ENCODE measurements at regions of chr16 and their contacts with region 1.

Region 1: GRCh38 chr16:106623-107324 is 28.7 kb downstream of the MPG start:
- DNase-seq: peak in 8 of 9 experiments; percentile 31 to 82 (median 60)
- ATAC-seq: peak; percentile 80
- H3K4me3 ChIP-seq: no peak overlapping the region
- H3K4me3 Mint-ChIP-seq: no peak overlapping the region
- H3K27ac ChIP-seq: no peak overlapping the region
- H3K27ac Mint-ChIP-seq: no peak overlapping the region
- H3K4me1 ChIP-seq: no peaks in the 10 kb centered on the region
- H3K4me1 Mint-ChIP-seq: peaks cover 3% of the 10 kb centered on the region
- H3K27me3 ChIP-seq: no peaks in the 10 kb centered on the region
- H3K27me3 Mint-ChIP-seq: no peaks in the 10 kb centered on the region
- CTCF ChIP-seq: peak; percentile 72

Region 2: DNA sequence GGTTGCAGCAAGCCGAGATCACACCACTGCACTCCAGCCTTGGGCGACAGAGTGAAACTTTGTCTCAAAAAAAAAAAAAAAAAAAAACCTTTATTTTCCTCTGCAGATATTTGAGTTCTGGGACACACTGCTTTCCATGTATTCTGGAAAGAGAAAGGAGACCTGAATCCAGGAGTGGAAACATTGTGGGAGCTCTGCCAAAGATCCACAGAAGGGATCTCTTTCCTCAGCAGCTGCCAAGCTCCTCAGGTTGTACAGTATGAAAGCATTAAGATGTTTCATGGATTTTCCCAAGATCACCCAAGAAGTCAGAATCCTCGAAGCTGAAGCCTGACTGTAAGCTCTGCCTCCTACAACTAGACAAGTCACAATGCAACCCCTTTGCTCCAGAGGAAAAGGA is 18.2 kb after region 1 on chr16:
- CTCF ChIA-PET with region 1: interaction called, 14 read pairs
- POLR2A ChIA-PET with region 1: no interaction called
- intact Hi-C with region 1: no loop called
- DNase-seq: no peak
- ATAC-seq: no peak
- H3K4me3 ChIP-seq: no peak overlapping the region
- H3K4me3 Mint-ChIP-seq: no peak overlapping the region
- H3K27ac ChIP-seq: peak overlapping the region in 1 of 2 experiments; percentile 83
- H3K27ac Mint-ChIP-seq: no peak overlapping the region
- H3K4me1 ChIP-seq: peaks cover 10% of the 10 kb centered on the region
- H3K4me1 Mint-ChIP-seq: peaks cover 21% of the 10 kb centered on the region
- H3K27me3 ChIP-seq: no peaks in the 10 kb centered on the region
- H3K27me3 Mint-ChIP-seq: no peaks in the 10 kb centered on the region
- CTCF ChIP-seq: no peak

Region 3: GRCh38 chr16:180938-181667 is 74.3 kb after region 1 on chr16:
- CTCF ChIA-PET with region 1: interaction called, 39 read pairs
- POLR2A ChIA-PET with region 1: interaction called, 6 read pairs
- intact Hi-C with region 1: loop called (anchors 1 kb)
- DNase-seq: peak; percentile 74 to 93 (median 85)
- ATAC-seq: peak; percentile 89
- H3K4me3 ChIP-seq: peak overlapping the region; percentile 42 to 59
- H3K4me3 Mint-ChIP-seq: peak overlapping the region; percentile 63
- H3K27ac ChIP-seq: no peak overlapping the region
- H3K27ac Mint-ChIP-seq: no peak overlapping the region
- H3K4me1 ChIP-seq: peaks cover 20% of the 10 kb centered on the region
- H3K4me1 Mint-ChIP-seq: peaks cover 8% of the 10 kb centered on the region
- H3K27me3 ChIP-seq: peaks cover 14 to 16% of the 10 kb centered on the region in 2 experiments
- H3K27me3 Mint-ChIP-seq: peaks cover 16% of the 10 kb centered on the region
- CTCF ChIP-seq: peak; percentile 96

Region 4: DNA sequence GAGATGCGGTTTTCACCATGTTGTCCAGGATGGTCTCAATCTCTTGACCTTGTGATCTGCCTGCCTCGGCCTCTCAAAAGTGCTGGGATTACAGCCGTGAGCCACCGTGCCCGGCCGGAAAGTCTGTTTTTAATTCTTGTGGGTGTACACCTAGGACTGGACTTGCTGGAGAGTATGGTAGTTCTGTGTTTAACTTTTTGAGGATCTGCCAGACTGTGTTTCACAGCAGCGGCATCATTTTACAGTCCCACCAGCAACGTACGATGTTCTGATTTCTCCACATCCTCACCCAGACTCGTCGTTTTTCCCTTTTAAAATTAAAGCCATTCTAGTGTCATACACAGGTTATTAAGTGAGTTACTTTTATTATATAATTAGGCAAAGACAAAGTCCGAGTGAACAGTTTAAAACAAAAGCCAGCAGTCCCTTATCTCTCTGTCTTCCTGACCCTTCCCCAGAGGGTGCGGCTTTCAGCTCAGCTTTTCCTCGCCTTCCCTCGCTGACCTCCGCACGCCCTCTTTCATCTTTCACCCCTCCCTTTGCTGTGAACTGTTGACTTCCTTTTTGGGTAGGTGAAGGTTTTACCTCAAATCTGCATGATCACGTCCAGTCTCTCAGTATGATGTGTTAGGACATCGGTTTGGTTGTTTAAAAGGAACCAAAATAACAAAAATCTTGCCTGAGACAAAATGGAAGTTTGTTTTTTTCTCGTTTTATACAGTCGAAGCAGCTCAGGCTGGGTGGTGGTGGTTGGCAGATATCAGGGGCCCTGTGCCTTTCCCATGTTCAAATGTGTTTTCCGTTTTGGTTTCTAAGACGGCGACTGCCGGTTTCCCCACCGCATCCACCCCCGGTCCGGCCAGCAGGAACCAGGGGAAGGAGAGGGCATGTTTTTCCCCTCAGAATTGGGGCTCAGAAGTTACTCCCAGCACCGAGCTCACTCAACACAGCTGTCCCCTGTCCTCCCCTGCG is 145.9 kb after region 1 on chr16:
- CTCF ChIA-PET with region 1: no interaction called
- POLR2A ChIA-PET with region 1: no interaction called
- intact Hi-C with region 1: no loop called
- DNase-seq: peak in 3 of 9 experiments; percentile 18 to 57 (median 37)
- ATAC-seq: peak; percentile 56
- H3K4me3 ChIP-seq: peak overlapping the region; percentile 24 to 33
- H3K4me3 Mint-ChIP-seq: peak overlapping the region; percentile 78
- H3K27ac ChIP-seq: peak overlapping the region; percentile 26 to 71
- H3K27ac Mint-ChIP-seq: peak overlapping the region; percentile 91
- H3K4me1 ChIP-seq: peaks cover 20% of the 10 kb centered on the region
- H3K4me1 Mint-ChIP-seq: peaks cover 20% of the 10 kb centered on the region
- H3K27me3 ChIP-seq: no peaks in the 10 kb centered on the region
- H3K27me3 Mint-ChIP-seq: no peaks in the 10 kb centered on the region
- CTCF ChIP-seq: no peak

Region 5: GRCh38 chr16:361872-362701 is 255.3 kb after region 1 on chr16:
- CTCF ChIA-PET with region 1: interaction called, 46 read pairs
- POLR2A ChIA-PET with region 1: interaction called, 3 read pairs
- intact Hi-C with region 1: loop called (anchors 1 kb)
- DNase-seq: peak; percentile 51 to 86 (median 77)
- ATAC-seq: peak; percentile 96
- H3K4me3 ChIP-seq: peak overlapping the region in 1 of 2 experiments; percentile 37
- H3K4me3 Mint-ChIP-seq: peak overlapping the region; percentile 26
- H3K27ac ChIP-seq: no peak overlapping the region
- H3K27ac Mint-ChIP-seq: peak overlapping the region; percentile 45
- H3K4me1 ChIP-seq: peaks cover 9% of the 10 kb centered on the region
- H3K4me1 Mint-ChIP-seq: peaks cover 8% of the 10 kb centered on the region
- H3K27me3 ChIP-seq: no peaks in the 10 kb centered on the region
- H3K27me3 Mint-ChIP-seq: no peaks in the 10 kb centered on the region
- CTCF ChIP-seq: peak; percentile 80

Region 6: DNA sequence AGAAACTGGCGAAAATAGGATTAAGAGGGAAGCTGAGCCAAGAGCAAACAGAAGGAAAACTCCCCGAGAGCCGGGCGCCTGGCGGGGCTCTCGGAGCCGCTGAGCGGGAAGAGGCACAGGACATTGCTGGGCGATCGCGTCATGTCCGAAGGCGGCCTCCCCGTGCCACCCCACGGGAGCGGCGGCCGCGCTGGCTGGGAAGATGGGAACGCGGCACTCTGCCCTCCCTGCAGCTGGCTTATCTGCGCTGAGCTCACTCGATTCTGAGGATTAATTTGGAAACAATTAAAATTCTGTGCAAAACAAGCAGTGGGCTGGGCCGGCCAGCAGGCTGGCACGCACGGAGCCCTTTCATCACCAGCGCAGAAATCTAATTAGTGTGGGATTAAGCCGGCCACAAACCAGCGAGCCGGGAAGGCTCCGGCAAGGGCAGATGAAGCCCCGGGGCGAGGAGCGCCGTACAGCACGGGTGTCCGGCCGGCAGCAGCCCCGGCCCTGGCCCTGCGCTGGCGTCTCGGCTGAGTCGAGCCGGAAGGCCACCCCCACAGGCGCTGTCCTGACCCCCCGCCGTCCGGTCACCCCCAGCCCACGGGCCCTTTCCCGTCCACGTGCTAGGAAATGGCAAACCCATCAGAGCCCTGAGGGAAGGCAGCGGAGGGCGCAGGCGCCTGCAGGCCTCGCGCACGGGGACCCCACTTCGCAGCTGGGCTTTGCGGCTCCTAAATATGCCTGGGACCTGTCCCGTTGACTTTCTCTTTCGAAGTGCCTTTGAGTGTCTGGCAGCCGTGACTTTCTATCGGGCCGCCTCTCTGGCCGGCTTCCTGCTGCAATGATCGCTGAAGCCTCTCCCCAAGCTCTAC is 912.7 kb after region 1 on chr16:
- CTCF ChIA-PET with region 1: no interaction called
- POLR2A ChIA-PET with region 1: no interaction called
- intact Hi-C with region 1: no loop called
- DNase-seq: no peak
- ATAC-seq: no peak
- H3K4me3 ChIP-seq: no peak overlapping the region
- H3K4me3 Mint-ChIP-seq: no peak overlapping the region
- H3K27ac ChIP-seq: no peak overlapping the region
- H3K27ac Mint-ChIP-seq: no peak overlapping the region
- H3K4me1 ChIP-seq: no peaks in the 10 kb centered on the region
- H3K4me1 Mint-ChIP-seq: no peaks in the 10 kb centered on the region
- H3K27me3 ChIP-seq: peaks cover 0 to 2% of the 10 kb centered on the region in 2 experiments
- H3K27me3 Mint-ChIP-seq: no peaks in the 10 kb centered on the region
- CTCF ChIP-seq: no peak